IMR-90 (cell line): ENCODE measurements at regions of chr20 and their contacts with region 1.

Region 1: DNA sequence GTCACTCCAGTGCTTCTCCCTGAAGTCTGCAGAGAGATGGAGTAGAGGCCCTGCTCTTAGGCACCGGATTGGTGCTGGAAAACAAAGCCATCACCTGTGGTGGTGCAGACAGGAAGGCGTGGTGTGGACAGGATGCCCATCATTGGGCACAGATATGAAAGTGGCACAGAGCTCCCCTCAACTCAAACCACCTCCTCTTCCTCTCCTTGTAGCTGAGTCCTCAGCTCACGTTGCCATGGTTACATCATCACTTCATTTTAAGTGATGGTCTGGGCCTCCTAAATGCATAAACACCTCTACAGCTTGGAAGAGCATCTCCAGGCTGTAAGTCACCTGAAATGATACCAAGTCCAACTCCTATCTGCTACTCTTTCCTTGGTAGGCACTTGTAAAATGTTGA is 8.0 kb upstream of the RTF2 start:
- DNase-seq: no peak
- ATAC-seq: no peak
- H3K4me3 ChIP-seq: no peak overlapping the region
- H3K27ac ChIP-seq: no peak overlapping the region
- H3K4me1 ChIP-seq: no peaks in the 10 kb centered on the region
- H3K27me3 ChIP-seq: no peaks in the 10 kb centered on the region
- CTCF ChIP-seq: no peak
- POLR2A ChIP-seq: no peak
- RAD21 ChIP-seq: no peak

Region 2: GRCh38 chr20:56187534-56188198 is 272.8 kb before region 1 on chr20:
- CTCF ChIA-PET with region 1: no interaction called
- POLR2A ChIA-PET with region 1: no interaction called
- dilution Hi-C with region 1: no loop called
- in situ Hi-C with region 1: no loop called
- intact Hi-C with region 1: no loop called
- DNase-seq: no peak
- ATAC-seq: no peak
- H3K4me3 ChIP-seq: no peak overlapping the region
- H3K27ac ChIP-seq: no peak overlapping the region
- H3K4me1 ChIP-seq: no peaks in the 10 kb centered on the region
- H3K27me3 ChIP-seq: no peaks in the 10 kb centered on the region
- CTCF ChIP-seq: no peak
- POLR2A ChIP-seq: no peak
- RAD21 ChIP-seq: no peak

Region 3: DNA sequence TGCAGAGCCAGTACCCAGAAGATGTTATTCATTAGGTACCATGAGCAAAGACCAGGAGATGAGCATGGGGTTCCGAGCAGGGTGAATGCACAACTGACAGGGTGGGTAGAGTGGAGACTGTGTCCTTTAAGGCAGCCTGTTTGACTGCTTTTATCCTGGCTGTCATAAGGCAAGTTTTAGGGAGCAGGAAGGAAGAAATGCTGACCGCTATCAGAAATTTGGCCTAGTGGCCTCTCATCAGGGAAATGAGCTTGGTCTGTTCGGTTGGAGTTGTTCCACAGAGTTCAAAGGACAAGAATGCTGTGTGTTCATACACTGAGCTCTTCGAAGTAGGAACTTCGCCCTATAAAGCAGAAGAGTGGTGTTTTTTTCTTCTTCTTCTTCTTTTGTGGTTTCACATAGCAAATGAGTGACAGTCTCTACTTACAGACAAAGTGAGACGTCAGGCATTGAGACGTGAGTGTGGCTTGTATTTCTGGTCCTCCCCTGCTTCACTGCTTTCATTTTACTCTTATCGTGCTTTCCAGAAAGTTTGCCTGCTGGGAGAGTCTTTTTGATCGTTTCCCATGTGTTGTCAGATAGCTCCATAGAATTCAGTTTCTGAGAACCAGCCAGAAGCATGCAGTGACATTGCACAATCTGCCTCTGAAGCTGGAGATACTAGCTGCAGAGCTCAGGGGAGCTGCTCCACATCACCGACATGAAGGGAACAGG is 48.5 kb before region 1 on chr20 and contains the start of gene CASS4:
- CTCF ChIA-PET with region 1: no interaction called
- POLR2A ChIA-PET with region 1: interaction called, 10 read pairs
- dilution Hi-C with region 1: no loop called
- in situ Hi-C with region 1: no loop called
- intact Hi-C with region 1: no loop called
- DNase-seq: peak; percentile 89
- ATAC-seq: peak; percentile 47
- H3K4me3 ChIP-seq: peak within 1 kb of the TSS; percentile 47
- H3K27ac ChIP-seq: peak within 1 kb of the TSS; percentile 100
- H3K4me1 ChIP-seq: peaks cover 20% of the 10 kb centered on the region
- H3K27me3 ChIP-seq: no peaks in the 10 kb centered on the region
- CTCF ChIP-seq: no peak
- POLR2A ChIP-seq: peak; percentile 64; the same call in 1 of the 2 replicates
- RAD21 ChIP-seq: no peak
- total RNA-seq, gene CASS4: 25.8 and 26.1 TPM in 2 replicates

Region 4: GRCh38 chr20:56540420-56540819 is 80.0 kb after region 1 on chr20:
- CTCF ChIA-PET with region 1: no interaction called
- POLR2A ChIA-PET with region 1: no interaction called
- dilution Hi-C with region 1: no loop called
- in situ Hi-C with region 1: no loop called
- intact Hi-C with region 1: no loop called
- DNase-seq: peak; percentile 24
- ATAC-seq: peak; percentile 44; the same call in 1 of the 2 replicates
- H3K4me3 ChIP-seq: no peak overlapping the region
- H3K27ac ChIP-seq: no peak overlapping the region
- H3K4me1 ChIP-seq: no peaks in the 10 kb centered on the region
- H3K27me3 ChIP-seq: peaks cover 3% of the 10 kb centered on the region; the same call in 1 of the 2 replicates
- CTCF ChIP-seq: no peak
- POLR2A ChIP-seq: no peak
- RAD21 ChIP-seq: no peak